ENCODE measurements at regions of chr21 and their contacts with region 1.

Region 1: DNA sequence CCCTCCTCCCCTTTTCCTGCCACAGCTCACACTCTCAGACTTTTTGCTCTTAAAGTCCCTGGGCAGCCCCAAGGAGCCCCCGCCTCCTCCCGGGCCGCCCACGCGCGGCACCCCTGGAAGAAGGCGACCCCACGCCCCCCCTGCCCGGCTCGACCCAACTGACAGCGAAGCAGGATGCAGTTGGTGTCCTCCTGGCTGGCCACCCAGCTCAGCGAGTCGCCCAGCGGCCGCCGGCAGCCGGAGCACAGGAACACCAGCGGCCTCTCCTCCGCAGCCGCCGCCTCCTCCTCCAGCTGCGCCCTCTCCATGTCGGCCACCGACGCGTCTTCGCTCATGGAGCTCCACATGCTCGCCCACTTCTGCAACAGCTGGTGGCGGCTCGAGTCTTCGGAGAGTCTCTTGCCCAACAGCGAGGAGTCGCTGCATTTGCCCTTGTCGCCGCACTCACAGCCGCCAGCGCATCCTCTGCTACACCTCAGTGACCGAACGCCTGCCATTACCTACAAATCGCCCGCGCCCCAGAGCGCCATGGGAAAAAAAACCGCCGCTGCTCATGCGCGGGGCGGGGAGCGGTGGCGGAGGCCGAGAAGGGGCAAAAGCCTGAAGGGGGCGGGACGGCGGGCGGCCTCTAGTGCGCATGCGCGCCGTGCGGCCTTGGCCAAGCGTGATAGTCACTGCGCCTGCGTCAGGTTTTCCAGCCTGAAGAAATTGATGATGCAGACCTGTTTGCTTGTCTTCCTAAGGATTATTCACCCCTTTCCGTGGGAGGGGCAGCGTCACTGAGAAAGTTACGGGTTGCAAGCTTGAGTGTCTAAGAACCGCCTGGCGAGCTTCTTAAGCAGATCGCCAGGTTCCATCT is at the start of gene MIS18A:
- DNase-seq: peak; percentile 95 to 99 (median 97)
- ATAC-seq: peak; percentile 95
- H3K4me3 ChIP-seq: peak within 1 kb of the TSS; percentile 67 to 74
- H3K4me3 Mint-ChIP-seq: peak within 1 kb of the TSS; percentile 99
- H3K27ac ChIP-seq: peak within 1 kb of the TSS; percentile 33 to 69
- H3K27ac Mint-ChIP-seq: peak within 1 kb of the TSS; percentile 92
- H3K4me1 ChIP-seq: peaks cover 16% of the 10 kb centered on the region
- H3K4me1 Mint-ChIP-seq: peaks cover 31% of the 10 kb centered on the region
- H3K27me3 ChIP-seq: no peaks in the 10 kb centered on the region
- H3K27me3 Mint-ChIP-seq: no peaks in the 10 kb centered on the region
- CTCF ChIP-seq: no peak
- total RNA-seq, gene MIS18A: 3.7 to 5.1 TPM

Region 2: GRCh38 chr21:31659536-31660258 is 619.0 kb before region 1 on chr21 and contains the start of gene SOD1:
- CTCF ChIA-PET with region 1: no interaction called
- POLR2A ChIA-PET with region 1: no interaction called
- intact Hi-C with region 1: loop called in 1 of 2 experiments (anchors 5 kb)
- DNase-seq: peak; percentile 93 to 98 (median 96)
- ATAC-seq: peak; percentile 93
- H3K4me3 ChIP-seq: peak within 1 kb of the TSS; percentile 73 to 83
- H3K4me3 Mint-ChIP-seq: peak within 1 kb of the TSS; percentile 100
- H3K27ac ChIP-seq: peak within 1 kb of the TSS; percentile 77 to 87
- H3K27ac Mint-ChIP-seq: peak within 1 kb of the TSS; percentile 100
- H3K4me1 ChIP-seq: peaks cover 55% of the 10 kb centered on the region
- H3K4me1 Mint-ChIP-seq: peaks cover 72% of the 10 kb centered on the region
- H3K27me3 ChIP-seq: no peaks in the 10 kb centered on the region
- H3K27me3 Mint-ChIP-seq: no peaks in the 10 kb centered on the region
- CTCF ChIP-seq: no peak
- total RNA-seq, gene SOD1: 125 to 140 TPM